ENCODE measurements at regions of chr11 and their contacts with region 1.

Region 1: DNA sequence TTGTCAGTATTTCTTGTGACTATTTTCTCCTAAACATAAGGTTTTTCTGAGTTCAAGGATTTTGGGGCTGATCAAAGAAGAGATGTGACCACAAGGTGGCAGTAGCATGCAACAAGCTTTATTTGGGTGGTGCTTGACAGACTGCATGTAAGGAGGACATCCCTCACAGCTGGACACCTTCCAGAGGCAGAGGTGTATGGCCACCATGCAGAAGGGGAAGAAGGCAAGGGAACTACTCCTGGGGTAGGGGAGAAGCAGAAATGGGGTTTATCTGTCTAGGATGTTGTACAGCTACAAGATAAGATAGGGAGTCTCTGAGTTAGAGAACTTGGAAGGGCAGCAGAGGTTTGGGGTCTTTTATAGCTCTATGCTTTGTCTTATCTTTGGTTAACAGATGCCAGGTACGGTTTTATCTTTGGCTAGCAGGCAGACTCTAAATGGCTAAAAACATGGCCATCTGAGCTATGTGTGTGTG is 5.1 kb upstream of the BIRC2 start:
- DNase-seq: peak; percentile 86
- H3K4me3 ChIP-seq: no peak overlapping the region
- H3K27ac ChIP-seq: no peak overlapping the region
- H3K4me1 ChIP-seq: peaks cover 24% of the 10 kb centered on the region
- H3K27me3 ChIP-seq: no peaks in the 10 kb centered on the region
- CTCF ChIP-seq: peak; percentile 73 to 74
- POLR2A ChIP-seq: no peak

Region 2: GRCh38 chr11:102293873-102294601 is 47.8 kb before region 1 on chr11:
- CTCF ChIA-PET with region 1: interaction called, 32 read pairs
- POLR2A ChIA-PET with region 1: no interaction called
- dilution Hi-C with region 1: no loop called
- intact Hi-C with region 1: loop called (anchors 2 kb)
- DNase-seq: peak; percentile 50
- H3K4me3 ChIP-seq: no peak overlapping the region
- H3K27ac ChIP-seq: no peak overlapping the region
- H3K4me1 ChIP-seq: no peaks in the 10 kb centered on the region
- H3K27me3 ChIP-seq: no peaks in the 10 kb centered on the region
- CTCF ChIP-seq: peak; percentile 41 to 61
- POLR2A ChIP-seq: no peak

Region 3: GRCh38 chr11:102361086-102362031 is 19.5 kb after region 1 on chr11:
- CTCF ChIA-PET with region 1: interaction called, 38 read pairs
- POLR2A ChIA-PET with region 1: no interaction called
- dilution Hi-C with region 1: no loop called
- intact Hi-C with region 1: no loop called
- DNase-seq: no peak
- H3K4me3 ChIP-seq: no peak overlapping the region
- H3K27ac ChIP-seq: no peak overlapping the region
- H3K4me1 ChIP-seq: no peaks in the 10 kb centered on the region
- H3K27me3 ChIP-seq: no peaks in the 10 kb centered on the region
- CTCF ChIP-seq: no peak
- POLR2A ChIP-seq: no peak

Region 4: GRCh38 chr11:102390667-102391465 is 49.0 kb after region 1 on chr11:
- CTCF ChIA-PET with region 1: interaction called, 26 read pairs
- POLR2A ChIA-PET with region 1: no interaction called
- dilution Hi-C with region 1: no loop called
- intact Hi-C with region 1: no loop called
- DNase-seq: peak; percentile 63
- H3K4me3 ChIP-seq: no peak overlapping the region
- H3K27ac ChIP-seq: no peak overlapping the region
- H3K4me1 ChIP-seq: peaks cover under 1% of the 10 kb centered on the region
- H3K27me3 ChIP-seq: no peaks in the 10 kb centered on the region
- CTCF ChIP-seq: peak; percentile 83 to 88
- POLR2A ChIP-seq: no peak

Region 5: GRCh38 chr11:102518296-102519094 is 176.6 kb after region 1 on chr11:
- CTCF ChIA-PET with region 1: interaction called, 12 read pairs
- POLR2A ChIA-PET with region 1: no interaction called
- dilution Hi-C with region 1: no loop called
- intact Hi-C with region 1: no loop called
- DNase-seq: no peak
- H3K4me3 ChIP-seq: no peak overlapping the region
- H3K27ac ChIP-seq: no peak overlapping the region
- H3K4me1 ChIP-seq: no peaks in the 10 kb centered on the region
- H3K27me3 ChIP-seq: no peaks in the 10 kb centered on the region
- CTCF ChIP-seq: no peak
- POLR2A ChIP-seq: no peak

Region 6: DNA sequence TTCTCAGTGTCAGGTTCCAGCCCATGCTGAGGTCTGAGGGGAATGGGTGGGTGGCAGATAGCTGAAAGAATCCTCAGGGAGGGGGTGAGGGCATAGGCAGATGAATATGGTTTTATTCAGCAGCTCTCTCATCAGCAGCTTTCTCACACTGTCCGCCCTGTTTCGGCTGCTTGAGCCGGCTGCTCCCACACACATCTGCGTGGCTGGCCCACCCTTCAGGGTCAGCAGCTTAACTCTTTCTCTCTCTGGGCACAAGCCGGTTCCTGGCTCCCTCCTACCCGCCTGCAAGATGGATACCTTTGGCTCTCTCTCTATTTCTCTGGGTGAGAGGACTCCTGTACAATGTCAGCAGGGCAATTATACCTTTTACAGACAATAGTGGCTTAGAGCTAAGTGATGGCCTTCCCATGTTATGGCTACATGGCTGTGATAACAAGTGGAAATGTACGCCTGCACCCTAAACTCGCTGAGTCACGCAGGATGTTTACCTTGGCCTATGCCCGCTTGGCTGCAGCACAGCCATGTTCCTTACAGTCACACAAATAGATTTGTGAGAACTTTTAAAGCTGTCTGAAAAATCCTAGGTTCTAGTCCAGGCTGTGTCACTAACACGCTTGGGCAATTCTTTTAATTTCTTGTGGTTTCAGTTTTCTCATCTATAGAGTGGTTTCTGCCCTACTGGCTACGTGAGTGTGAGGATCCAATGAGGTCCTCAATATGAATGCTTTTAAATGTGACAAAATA is 279.1 kb after region 1 on chr11:
- CTCF ChIA-PET with region 1: interaction called, 10 read pairs
- POLR2A ChIA-PET with region 1: no interaction called
- dilution Hi-C with region 1: no loop called
- intact Hi-C with region 1: no loop called
- DNase-seq: peak; percentile 77
- H3K4me3 ChIP-seq: no peak overlapping the region
- H3K27ac ChIP-seq: peak overlapping the region; percentile 52
- H3K4me1 ChIP-seq: peaks cover 17% of the 10 kb centered on the region
- H3K27me3 ChIP-seq: no peaks in the 10 kb centered on the region
- CTCF ChIP-seq: no peak
- POLR2A ChIP-seq: no peak